ENCODE measurements at regions of chr7 and their contacts with region 1.

Region 1: DNA sequence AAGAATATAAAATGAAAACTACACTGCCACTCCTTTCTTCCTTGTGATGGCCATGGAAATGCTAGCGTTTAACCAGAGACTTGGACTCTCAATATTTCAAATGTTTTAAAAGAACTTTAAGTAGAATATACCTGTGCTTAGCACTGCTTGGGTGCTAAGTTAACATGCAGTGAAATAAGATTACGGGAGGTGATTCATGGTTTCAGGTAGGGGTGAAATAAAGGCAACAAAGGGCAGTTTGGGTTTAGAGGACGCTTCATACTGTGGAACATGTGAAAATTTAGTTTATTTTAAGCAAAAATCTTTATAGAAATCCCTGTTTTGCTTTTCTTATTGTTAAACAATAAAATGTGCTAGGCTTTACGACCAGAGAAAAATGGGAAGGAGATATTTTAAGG is 94.0 kb downstream of the PTPRZ1 start:
- DNase-seq: no peak
- H3K4me3 Mint-ChIP-seq: no peak overlapping the region
- H3K27ac Mint-ChIP-seq: no peak overlapping the region
- H3K4me1 Mint-ChIP-seq: no peaks in the 10 kb centered on the region
- H3K27me3 Mint-ChIP-seq: no peaks in the 10 kb centered on the region
- CTCF ChIP-seq: no peak

Region 2: GRCh38 chr7:121473645-121474300 is 493.2 kb before region 1 on chr7:
- CTCF ChIA-PET with region 1: interaction called, 10 read pairs
- intact Hi-C with region 1: no loop called
- DNase-seq: no peak
- H3K4me3 Mint-ChIP-seq: no peak overlapping the region
- H3K27ac Mint-ChIP-seq: no peak overlapping the region
- H3K4me1 Mint-ChIP-seq: peaks cover 26% of the 10 kb centered on the region
- H3K27me3 Mint-ChIP-seq: no peaks in the 10 kb centered on the region
- CTCF ChIP-seq: no peak

Region 3: GRCh38 chr7:121547544-121548092 is 419.3 kb before region 1 on chr7:
- CTCF ChIA-PET with region 1: no interaction called
- intact Hi-C with region 1: no loop called
- DNase-seq: no peak
- H3K4me3 Mint-ChIP-seq: no peak overlapping the region
- H3K27ac Mint-ChIP-seq: no peak overlapping the region
- H3K4me1 Mint-ChIP-seq: peaks cover 24% of the 10 kb centered on the region
- H3K27me3 Mint-ChIP-seq: no peaks in the 10 kb centered on the region
- CTCF ChIP-seq: peak; percentile 31

Region 4: DNA sequence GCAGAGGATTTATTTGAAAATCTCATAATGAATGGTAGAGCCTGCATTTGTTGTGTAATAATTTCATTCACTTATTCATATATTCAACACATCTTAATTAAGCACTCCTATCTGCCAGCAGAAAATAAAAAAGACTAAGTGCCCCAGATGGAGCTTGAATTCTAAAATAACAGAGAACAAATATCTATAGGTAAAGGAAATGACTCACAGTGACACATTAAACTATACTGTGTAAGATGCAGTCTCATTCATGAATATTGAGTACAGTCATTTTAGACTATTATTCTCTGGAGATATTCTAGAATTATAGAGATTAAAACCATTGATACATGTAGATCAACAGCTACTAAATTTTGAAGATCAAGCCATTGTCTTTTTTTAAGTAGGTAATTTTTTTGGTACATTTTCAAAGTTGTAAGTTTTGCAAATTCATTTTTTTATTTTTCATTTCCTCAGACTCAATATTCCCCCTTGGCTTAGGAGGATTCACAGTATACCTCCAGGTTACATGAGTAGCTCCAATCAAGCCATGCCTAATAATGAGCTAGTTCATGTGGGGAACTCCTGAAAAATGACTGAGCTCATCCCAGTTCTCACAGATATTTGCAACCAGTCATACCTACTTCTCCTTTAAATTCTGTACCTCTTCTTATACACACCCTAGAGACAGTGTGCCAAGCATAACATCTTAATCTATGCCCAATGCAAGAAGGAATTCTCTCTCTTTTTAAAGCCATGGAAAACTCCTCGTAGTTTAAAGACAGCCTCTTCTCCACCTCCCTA is 21.7 kb before region 1 on chr7:
- CTCF ChIA-PET with region 1: no interaction called
- intact Hi-C with region 1: no loop called
- DNase-seq: no peak
- H3K4me3 Mint-ChIP-seq: no peak overlapping the region
- H3K27ac Mint-ChIP-seq: no peak overlapping the region
- H3K4me1 Mint-ChIP-seq: peaks cover 16% of the 10 kb centered on the region
- H3K27me3 Mint-ChIP-seq: no peaks in the 10 kb centered on the region
- CTCF ChIP-seq: no peak